ENCODE measurements at regions of chr11 and their contacts with region 1.

Region 1: DNA sequence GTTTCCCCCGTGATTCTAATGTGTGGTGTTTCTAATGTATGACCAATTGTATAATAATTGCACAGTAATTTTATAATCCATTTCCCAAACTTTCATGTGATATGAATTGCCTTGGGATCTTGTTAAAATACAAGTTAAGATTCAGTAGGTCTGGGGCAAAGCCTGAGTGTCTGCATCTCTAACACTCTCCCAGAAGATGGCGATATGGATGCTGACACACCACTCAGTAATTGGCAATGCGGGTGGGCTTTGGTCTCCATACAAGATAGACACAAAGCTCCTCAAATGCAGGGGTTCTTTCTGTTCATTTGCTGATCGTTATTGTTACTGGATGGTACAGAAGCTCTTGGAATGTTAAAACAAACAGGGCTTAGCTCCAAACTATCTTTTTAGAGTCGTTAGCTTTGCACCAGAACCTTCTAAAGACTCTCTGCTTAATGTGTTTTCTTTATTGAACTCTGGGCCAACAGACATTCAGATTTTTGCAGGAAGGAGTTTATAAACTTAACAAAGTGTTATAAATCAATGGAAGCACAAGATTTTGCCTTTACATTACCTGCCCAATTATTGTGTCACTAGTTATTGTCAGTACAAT is 45.4 kb upstream of the ANO3 start:
- DNase-seq: no peak
- ATAC-seq: no peak
- H3K4me3 Mint-ChIP-seq: no peak overlapping the region
- H3K27ac Mint-ChIP-seq: no peak overlapping the region
- H3K4me1 Mint-ChIP-seq: peaks cover 7% of the 10 kb centered on the region
- H3K27me3 Mint-ChIP-seq: peaks cover 13% of the 10 kb centered on the region
- CTCF ChIP-seq: no peak

Region 2: GRCh38 chr11:26268980-26269660 is 17.4 kb before region 1 on chr11:
- CTCF ChIA-PET with region 1: no interaction called
- POLR2A ChIA-PET with region 1: no interaction called
- intact Hi-C with region 1: no loop called
- DNase-seq: no peak
- ATAC-seq: no peak
- H3K4me3 Mint-ChIP-seq: no peak overlapping the region
- H3K27ac Mint-ChIP-seq: no peak overlapping the region
- H3K4me1 Mint-ChIP-seq: no peaks in the 10 kb centered on the region
- H3K27me3 Mint-ChIP-seq: no peaks in the 10 kb centered on the region
- CTCF ChIP-seq: no peak

Region 3: GRCh38 chr11:26649884-26650283 is 363.3 kb after region 1 on chr11:
- CTCF ChIA-PET with region 1: no interaction called
- POLR2A ChIA-PET with region 1: no interaction called
- intact Hi-C with region 1: loop called (anchors 5 kb)
- DNase-seq: peak; percentile 54
- ATAC-seq: no peak
- H3K4me3 Mint-ChIP-seq: no peak overlapping the region
- H3K27ac Mint-ChIP-seq: no peak overlapping the region
- H3K4me1 Mint-ChIP-seq: no peaks in the 10 kb centered on the region
- H3K27me3 Mint-ChIP-seq: no peaks in the 10 kb centered on the region
- CTCF ChIP-seq: peak; percentile 46

Measured in activated CD8-positive, alpha-beta T cell treated with anti-CD3 and anti-CD28 coated beads for 36 hours (primary cell).